Left colon (tissue), 2 donors: ENCODE measurements at regions of chr11 and their contacts with region 1.

Region 1: DNA sequence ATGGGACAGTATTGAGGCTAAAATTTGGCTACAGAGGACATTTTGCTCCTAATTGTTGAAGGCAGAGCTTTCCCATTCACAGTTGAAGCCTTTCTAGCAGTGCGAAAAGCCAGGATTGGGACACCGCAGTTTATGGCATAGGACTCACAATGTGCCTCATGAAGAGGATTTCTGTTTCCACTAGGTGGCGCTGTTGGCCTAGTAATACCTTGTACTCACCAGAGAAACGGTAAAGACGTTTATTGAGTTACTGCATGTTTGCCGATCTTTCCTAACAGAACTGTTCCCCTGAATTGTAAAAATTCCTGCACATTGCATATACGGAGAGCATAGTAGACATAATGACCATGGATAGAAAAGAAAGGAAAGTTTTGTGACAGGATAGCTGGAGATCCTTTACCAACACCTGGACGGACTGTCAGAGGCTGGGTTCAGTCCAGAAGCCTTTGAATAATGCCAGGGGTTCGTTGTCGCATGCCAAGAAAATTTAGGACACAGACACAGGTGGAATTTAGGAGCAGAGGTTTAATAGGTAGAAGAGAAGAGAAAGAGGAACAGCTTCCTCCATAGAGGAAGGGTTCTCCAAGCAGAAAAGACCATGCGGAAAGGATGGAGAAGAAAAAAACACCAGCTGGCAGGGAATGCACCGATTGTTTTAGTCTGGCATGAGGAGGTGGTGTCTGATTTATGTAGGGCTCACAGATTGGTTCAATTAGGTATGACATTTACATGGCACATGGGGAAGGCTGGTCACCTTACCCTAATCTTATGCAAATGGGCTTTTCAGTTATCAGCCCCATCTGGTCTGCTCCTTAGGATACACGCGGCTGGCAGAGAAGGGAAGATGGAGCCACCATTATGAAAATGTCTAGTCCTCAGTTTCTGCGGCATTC is 10.8 kb upstream of the OR51D1 start:
- DNase-seq: peak; percentile 47 to 77
- ATAC-seq: peak; percentile 87

Region 2: GRCh38 chr11:4740735-4741134 is 114.3 kb after region 1 on chr11:
- intact Hi-C with region 1: no loop called
- DNase-seq: no peak
- ATAC-seq: no peak

Region 3: DNA sequence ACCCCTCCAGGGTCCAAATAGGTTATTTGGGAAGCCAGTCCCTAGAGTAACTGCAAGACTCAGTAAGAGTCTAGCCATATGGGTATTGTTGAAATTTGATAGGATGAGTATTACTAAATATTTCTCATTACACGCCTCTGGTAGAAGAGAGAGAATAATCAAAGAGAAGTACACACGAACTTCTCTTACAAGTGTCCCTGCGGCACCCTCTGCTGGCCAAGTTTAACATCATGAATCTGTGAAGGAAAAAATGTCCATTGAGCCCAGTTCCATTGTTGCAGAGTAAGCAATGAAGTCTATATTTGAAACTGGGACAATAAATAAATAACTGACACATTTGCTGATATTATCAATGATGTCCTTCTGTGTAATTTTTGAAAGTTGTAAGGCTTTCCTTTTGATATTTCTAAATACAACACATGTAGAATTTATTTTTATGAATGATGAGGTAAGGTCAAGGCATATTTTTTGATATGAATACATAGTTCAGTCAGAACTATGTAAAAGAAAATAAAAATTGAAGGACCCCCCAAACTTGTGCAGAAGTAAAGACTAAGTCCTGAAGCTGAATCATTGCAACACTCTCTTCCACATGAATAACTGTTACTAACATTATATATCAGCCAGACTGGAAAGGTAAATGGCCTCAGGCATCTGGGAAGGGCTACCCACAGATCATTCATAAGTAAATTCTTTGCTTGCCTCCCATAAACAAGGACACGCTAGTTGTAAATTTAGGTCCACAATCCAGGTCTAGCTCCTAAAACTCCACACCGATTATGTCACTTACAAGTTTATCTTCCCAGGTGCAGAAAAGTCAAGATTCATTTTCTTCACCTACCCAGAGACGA is 378.2 kb after region 1 on chr11:
- intact Hi-C with region 1: loop called in 1 of 2 experiments (anchors 5 kb)
- DNase-seq: peak in 1 of 2 donors; percentile 67
- ATAC-seq: peak; percentile 58